Left ventricle myocardium superior (tissue), 1 donor: ENCODE measurements at regions of chr3 and their contacts with region 1.

Region 1: GRCh38 chr3:33883538-33883950 is 85.1 kb downstream of the PDCD6IP start:
- DNase-seq: no peak
- ATAC-seq: peak; percentile 43

Region 2: GRCh38 chr3:34683851-34684250 is 800.3 kb after region 1 on chr3:
- intact Hi-C with region 1: loop called (anchors 5 kb)
- DNase-seq: peak; percentile 79
- ATAC-seq: peak; percentile 68